ENCODE measurements at regions of chr3 and their contacts with region 1.

Region 1: GRCh38 chr3:50321336-50322114 is 1.0 kb downstream of the HYAL2 start:
- DNase-seq: peak; percentile 88
- ATAC-seq: peak; percentile 81
- H3K4me3 Mint-ChIP-seq: peak overlapping the region; percentile 88
- H3K27ac Mint-ChIP-seq: peak overlapping the region; percentile 98
- H3K4me1 Mint-ChIP-seq: peaks cover 40% of the 10 kb centered on the region
- H3K27me3 Mint-ChIP-seq: no peaks in the 10 kb centered on the region
- CTCF ChIP-seq: no peak

Region 2: GRCh38 chr3:48716982-48717746 is 1604.4 kb before region 1 on chr3 and contains the start of gene IP6K2:
- CTCF ChIA-PET with region 1: no interaction called
- POLR2A ChIA-PET with region 1: no interaction called
- intact Hi-C with region 1: loop called (anchors 5 kb)
- DNase-seq: peak; percentile 98
- ATAC-seq: peak; percentile 99
- H3K4me3 Mint-ChIP-seq: peak within 1 kb of the TSS; percentile 98
- H3K27ac Mint-ChIP-seq: peak within 1 kb of the TSS; percentile 94
- H3K4me1 Mint-ChIP-seq: peaks cover 37% of the 10 kb centered on the region
- H3K27me3 Mint-ChIP-seq: peaks cover 4% of the 10 kb centered on the region
- CTCF ChIP-seq: no peak
- total RNA-seq, gene IP6K2: 83.2 and 94.1 TPM in 2 replicates

Region 3: DNA sequence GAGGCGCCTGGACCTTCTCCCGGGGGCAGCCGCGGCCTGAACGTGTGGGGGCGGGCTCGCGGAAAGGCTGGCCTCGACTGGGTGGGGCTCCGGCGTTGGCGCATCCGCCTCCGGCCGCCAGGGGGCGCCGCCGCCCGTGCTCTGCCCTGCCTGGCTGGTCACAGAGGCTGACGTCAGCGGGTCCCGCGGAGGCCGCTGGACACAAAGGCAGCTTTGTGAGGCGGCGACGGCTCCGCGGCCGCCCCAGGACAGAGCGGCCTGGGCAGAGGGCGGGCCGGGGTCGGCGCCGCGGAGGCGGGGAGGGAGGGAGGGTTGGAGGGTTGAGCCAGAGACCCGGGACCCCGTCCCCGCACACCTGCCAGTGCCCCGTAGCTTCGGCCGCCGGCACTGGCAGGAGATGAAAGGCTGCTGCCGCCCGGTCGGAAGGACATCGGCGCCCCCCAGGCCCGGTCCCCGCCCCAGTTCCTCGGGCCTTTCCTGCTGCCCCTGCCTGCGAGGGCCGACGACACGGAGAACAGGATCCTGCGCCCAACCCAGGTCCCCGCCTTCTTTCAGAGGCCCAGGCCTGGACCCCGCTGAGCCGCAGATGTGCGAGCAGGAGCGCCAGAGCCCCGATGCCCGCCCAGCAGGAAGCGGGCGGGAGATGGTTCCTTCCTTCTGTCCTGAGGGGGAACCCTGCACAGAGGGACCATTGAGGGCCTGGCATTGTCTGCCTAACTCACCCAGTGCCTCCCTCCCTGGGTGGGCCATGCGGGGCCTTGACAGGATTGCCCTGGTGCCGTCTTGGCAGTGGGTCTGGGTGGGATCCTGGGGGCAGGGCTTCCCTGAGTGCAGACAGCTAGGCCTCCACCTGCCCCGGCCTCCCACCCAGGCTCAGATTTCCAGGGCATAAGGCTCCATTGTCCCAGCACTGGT is 61.2 kb before region 1 on chr3:
- CTCF ChIA-PET with region 1: interaction called, 3 read pairs
- POLR2A ChIA-PET with region 1: no interaction called
- intact Hi-C with region 1: loop called (anchors 1 kb)
- DNase-seq: peak; percentile 91
- ATAC-seq: peak; percentile 93
- H3K4me3 Mint-ChIP-seq: peak overlapping the region; percentile 73
- H3K27ac Mint-ChIP-seq: peak overlapping the region; percentile 50
- H3K4me1 Mint-ChIP-seq: peaks cover 7% of the 10 kb centered on the region
- H3K27me3 Mint-ChIP-seq: no peaks in the 10 kb centered on the region
- CTCF ChIP-seq: no peak

Region 4: GRCh38 chr3:50292159-50293078 is 29.1 kb before region 1 on chr3 and contains the start of gene IFRD2:
- CTCF ChIA-PET with region 1: no interaction called
- POLR2A ChIA-PET with region 1: interaction called, 20 read pairs
- intact Hi-C with region 1: loop called (anchors 1 kb)
- DNase-seq: peak; percentile 87
- ATAC-seq: peak; percentile 99
- H3K4me3 Mint-ChIP-seq: peak within 1 kb of the TSS; percentile 86
- H3K27ac Mint-ChIP-seq: peak within 1 kb of the TSS; percentile 95
- H3K4me1 Mint-ChIP-seq: peaks cover 20% of the 10 kb centered on the region
- H3K27me3 Mint-ChIP-seq: no peaks in the 10 kb centered on the region
- CTCF ChIP-seq: no peak
- total RNA-seq, gene IFRD2: 92.2 and 105 TPM in 2 replicates

Region 5: DNA sequence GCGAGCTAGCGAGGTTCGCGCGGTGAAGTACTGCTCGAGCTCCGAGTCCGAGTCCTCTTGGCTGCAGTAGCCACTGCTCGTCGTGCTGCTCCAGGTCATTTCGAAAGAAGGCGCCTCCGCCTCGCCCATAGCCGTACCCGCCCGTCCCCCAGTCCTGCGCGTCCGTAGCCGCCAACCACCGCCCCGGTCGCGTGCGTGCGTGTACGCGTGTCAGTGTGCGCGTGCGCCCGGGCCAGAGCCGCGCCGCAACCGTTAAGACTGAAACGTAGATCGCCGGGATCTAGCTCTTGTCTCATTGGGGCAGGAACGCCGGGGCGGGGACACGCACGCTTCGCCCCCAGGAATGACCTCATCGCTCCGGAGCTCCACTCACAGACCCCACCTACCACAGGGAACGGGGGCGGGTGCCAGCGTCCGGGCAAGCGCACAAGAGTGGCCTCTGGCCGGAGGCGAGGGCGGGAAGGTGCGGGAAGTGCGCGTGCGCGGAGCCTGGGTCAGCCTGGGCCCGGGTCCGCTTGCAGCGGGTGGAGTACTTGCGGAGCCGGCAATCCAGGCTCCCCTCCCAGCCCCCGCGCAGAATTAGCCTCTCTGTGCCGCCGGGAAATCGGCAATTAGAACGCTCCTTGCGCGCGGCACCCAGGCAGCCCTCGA is 15.8 kb after region 1 on chr3:
- CTCF ChIA-PET with region 1: interaction called, 9 read pairs
- POLR2A ChIA-PET with region 1: interaction called, 167 read pairs
- intact Hi-C with region 1: loop called (anchors 2 kb)
- DNase-seq: peak; percentile 90
- ATAC-seq: peak; percentile 83
- H3K4me3 Mint-ChIP-seq: peak overlapping the region; percentile 95
- H3K27ac Mint-ChIP-seq: peak overlapping the region; percentile 98
- H3K4me1 Mint-ChIP-seq: peaks cover 66% of the 10 kb centered on the region
- H3K27me3 Mint-ChIP-seq: no peaks in the 10 kb centered on the region
- CTCF ChIP-seq: no peak

Region 6: DNA sequence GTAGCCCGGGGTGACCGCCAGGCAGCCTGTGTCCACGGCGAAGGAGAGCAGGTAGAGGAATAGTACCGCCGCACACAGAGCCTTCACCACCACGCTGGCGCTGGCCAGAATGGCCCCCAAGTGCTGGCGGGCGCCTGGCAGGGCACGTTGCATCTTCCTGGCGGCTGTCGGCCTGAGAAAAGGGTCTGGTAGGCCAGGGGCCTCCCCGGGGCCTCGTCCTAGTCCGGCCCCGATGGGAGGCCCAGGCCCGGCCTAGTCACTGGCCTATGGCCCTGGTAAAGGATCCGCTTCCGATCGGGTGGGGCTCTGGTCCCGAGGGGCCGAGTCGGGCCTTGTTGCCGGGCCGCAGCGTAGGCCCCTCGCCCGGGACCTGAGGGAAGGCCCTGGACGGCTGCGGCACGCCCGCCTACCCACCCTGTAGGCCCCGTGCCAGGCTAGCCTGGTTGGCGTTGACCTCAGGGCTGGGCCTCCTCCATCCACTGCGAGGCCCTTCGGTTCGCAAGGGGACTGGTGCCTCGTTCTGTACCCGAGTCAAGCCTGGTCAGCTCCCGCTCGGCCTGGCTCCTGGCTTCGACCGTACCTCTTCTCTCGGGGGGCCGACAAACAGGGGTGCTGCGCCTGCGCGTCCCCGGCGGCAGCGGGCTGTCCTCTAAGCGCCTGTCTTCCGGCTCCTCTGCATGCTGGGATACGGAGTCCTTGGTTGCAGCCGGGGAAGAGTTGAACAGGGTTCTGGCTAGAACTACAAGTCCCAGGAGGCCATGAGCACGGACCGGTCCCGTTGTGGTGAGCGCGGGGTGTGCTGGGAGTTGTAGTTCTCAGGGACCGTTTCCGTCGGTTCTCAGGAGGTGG is 37.6 kb after region 1 on chr3 and contains the start of gene TMEM115:
- CTCF ChIA-PET with region 1: no interaction called
- POLR2A ChIA-PET with region 1: interaction called, 4 read pairs
- intact Hi-C with region 1: loop called (anchors 1 kb)
- DNase-seq: peak; percentile 88
- ATAC-seq: peak; percentile 100
- H3K4me3 Mint-ChIP-seq: peak within 1 kb of the TSS; percentile 96
- H3K27ac Mint-ChIP-seq: peak within 1 kb of the TSS; percentile 89
- H3K4me1 Mint-ChIP-seq: peaks cover 49% of the 10 kb centered on the region
- H3K27me3 Mint-ChIP-seq: no peaks in the 10 kb centered on the region
- CTCF ChIP-seq: no peak
- total RNA-seq, gene TMEM115: 18.7 and 19.6 TPM in 2 replicates